ENCODE measurements at regions of chr3 and their contacts with region 1.

Region 1: DNA sequence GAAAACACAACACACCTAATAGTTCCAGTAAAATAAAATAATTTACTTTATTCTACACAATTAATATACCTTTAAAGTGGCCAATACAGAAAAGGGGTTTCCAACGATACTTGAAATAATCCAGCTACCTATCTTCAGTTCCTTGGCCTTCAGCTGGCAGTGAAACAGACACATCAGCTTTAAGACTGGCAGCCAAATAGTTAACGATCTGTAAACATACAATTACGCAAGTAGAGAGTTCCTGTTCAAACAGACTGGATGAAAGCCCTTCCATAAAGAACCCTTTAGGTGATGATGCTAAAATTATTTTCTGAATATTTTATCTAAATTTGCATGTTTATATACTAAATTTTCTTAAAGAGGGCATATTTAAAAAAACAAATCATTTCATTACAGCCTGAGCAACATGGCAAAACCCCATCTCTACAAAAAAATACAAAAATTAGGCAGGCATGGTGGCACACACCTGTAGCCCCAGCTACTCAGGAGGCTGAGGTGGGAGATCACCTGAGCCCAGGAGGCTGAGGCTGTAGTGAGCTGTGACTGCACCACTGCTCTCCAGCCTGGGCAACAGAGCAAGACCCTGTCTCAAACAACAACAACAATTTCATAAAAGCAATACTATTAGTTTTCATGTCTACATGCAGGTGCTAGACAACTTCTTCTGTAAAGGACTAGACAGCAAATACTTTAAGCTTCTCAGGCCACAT is 12.9 kb downstream of the DYNC1LI1 start:
- DNase-seq: no peak
- ATAC-seq: no peak
- H3K4me3 ChIP-seq: no peak overlapping the region
- H3K27ac ChIP-seq: no peak overlapping the region
- H3K4me1 ChIP-seq: peaks cover 0 to 42% (median 18%) of the 10 kb centered on the region in 12 donors
- H3K27me3 ChIP-seq: no peaks in the 10 kb centered on the region
- CTCF ChIP-seq: no peak
- POLR2A ChIP-seq: no peak

Region 2: DNA sequence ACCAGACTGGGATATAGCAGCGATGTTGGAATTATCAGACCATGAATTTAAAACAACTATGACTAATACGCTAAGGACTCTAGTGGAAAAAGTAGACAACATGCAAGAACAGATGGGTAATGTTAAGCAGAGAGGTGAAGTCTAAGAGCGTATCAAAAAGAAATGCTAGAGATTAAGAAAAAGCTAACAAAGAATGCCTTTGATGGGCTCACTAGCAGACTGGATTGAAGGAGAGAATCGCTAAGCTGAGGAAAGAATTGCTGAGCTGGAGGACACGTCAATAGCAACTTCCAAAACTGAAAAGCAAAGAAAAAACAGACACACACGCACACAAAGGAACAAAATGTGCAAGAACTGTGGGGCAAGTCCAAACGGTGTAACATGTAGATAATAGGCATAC is 35.1 kb before region 1 on chr3:
- intact Hi-C with region 1: loop called in 1 of 10 experiments (anchors 5 kb)
- DNase-seq: no peak
- ATAC-seq: peak; percentile 24 to 80 (median 44)
- H3K4me3 ChIP-seq: no peak overlapping the region
- H3K27ac ChIP-seq: no peak overlapping the region
- H3K4me1 ChIP-seq: no peaks in the 10 kb centered on the region
- H3K27me3 ChIP-seq: no peaks in the 10 kb centered on the region
- CTCF ChIP-seq: no peak
- POLR2A ChIP-seq: no peak

Region 3: GRCh38 chr3:32577581-32578556 is 20.1 kb after region 1 on chr3:
- intact Hi-C with region 1: no loop called
- DNase-seq: peak in 2 of 5 donors; percentile 24 to 40
- ATAC-seq: peak; percentile 46 to 86 (median 77)
- H3K4me3 ChIP-seq: peak overlapping the region in 9 of 12 donors; percentile 3 to 49 (median 27)
- H3K27ac ChIP-seq: peak overlapping the region; percentile 55 to 86 (median 75)
- H3K4me1 ChIP-seq: peaks cover 0 to 34% (median 17%) of the 10 kb centered on the region in 12 donors
- H3K27me3 ChIP-seq: no peaks in the 10 kb centered on the region
- CTCF ChIP-seq: no peak
- POLR2A ChIP-seq: no peak

Measured in heart left ventricle (tissue), 16 donors.